Thyroid gland (tissue), 4 donors: ENCODE measurements at regions of chr2 and their contacts with region 1.

Region 1: GRCh38 chr2:171416009-171416926 is 17.5 kb downstream of the METTL8 start:
- DNase-seq: peak; percentile 92 to 94
- H3K4me3 ChIP-seq: no peak overlapping the region
- H3K27ac ChIP-seq: no peak overlapping the region
- H3K4me1 ChIP-seq: no peaks in the 10 kb centered on the region
- H3K27me3 ChIP-seq: no peaks in the 10 kb centered on the region
- CTCF ChIP-seq: peak; percentile 51 to 92 (median 76)
- POLR2A ChIP-seq: no peak

Region 2: DNA sequence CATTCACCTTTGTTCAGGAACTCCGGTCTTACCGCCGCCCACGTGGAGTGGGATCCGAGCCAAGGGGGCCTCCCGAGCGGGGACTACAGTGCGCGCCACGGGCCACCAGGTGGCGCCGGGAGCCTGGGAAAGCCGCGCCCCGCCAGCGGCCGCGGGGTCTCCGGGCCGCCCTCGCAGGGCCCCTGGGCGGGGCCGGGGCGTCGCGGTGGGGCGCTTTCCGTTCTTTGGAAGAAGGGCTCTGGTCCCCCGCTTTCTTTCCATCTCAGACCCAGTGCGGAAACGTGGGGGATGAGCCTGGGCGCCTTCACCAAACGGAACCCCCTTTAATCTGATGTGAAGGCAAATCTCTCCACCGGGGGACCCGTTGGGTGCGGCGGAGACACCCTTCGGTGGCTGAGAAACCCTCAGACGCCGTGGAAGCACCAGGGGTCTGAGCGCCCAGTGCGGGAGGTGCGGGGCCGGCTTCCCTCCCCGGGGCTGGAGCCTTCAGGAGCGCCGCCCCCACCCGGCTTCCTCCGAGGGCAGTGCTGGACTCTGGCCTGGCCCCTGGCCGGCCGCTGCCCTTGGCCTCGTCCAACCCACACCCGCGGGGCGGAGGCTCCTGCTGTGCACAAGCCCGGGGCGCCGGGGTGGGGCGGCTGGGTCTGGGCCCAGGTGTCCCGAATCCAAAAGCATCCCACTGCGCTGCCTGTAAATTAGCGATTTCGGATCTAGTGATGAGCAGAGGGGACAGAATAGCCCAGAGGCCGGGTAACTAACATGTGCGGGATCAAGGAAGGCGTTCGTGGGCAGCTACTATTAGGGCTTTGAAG is 442.6 kb before region 1 on chr2:
- intact Hi-C with region 1: loop called (anchors 5 kb)
- DNase-seq: peak; percentile 93
- H3K4me3 ChIP-seq: peak overlapping the region in 2 of 3 donors; percentile 26 to 57
- H3K27ac ChIP-seq: peak overlapping the region; percentile 20 to 75 (median 69)
- H3K4me1 ChIP-seq: peaks cover 8 to 14% of the 10 kb centered on the region in 2 donors
- H3K27me3 ChIP-seq: no peaks in the 10 kb centered on the region
- CTCF ChIP-seq: peak in 5 of 6 experiments; percentile 60 to 99 (median 97)
- POLR2A ChIP-seq: peak in 1 of 2 donors; percentile 56

Region 3: GRCh38 chr2:171086352-171087290 is 329.6 kb before region 1 on chr2:
- intact Hi-C with region 1: no loop called
- DNase-seq: peak; percentile 34 to 44
- H3K4me3 ChIP-seq: no peak overlapping the region
- H3K27ac ChIP-seq: no peak overlapping the region
- H3K4me1 ChIP-seq: peaks cover 11 to 13% of the 10 kb centered on the region in 2 donors
- H3K27me3 ChIP-seq: no peaks in the 10 kb centered on the region
- CTCF ChIP-seq: peak in 5 of 6 experiments; percentile 16 to 58 (median 40)
- POLR2A ChIP-seq: no peak

Region 4: DNA sequence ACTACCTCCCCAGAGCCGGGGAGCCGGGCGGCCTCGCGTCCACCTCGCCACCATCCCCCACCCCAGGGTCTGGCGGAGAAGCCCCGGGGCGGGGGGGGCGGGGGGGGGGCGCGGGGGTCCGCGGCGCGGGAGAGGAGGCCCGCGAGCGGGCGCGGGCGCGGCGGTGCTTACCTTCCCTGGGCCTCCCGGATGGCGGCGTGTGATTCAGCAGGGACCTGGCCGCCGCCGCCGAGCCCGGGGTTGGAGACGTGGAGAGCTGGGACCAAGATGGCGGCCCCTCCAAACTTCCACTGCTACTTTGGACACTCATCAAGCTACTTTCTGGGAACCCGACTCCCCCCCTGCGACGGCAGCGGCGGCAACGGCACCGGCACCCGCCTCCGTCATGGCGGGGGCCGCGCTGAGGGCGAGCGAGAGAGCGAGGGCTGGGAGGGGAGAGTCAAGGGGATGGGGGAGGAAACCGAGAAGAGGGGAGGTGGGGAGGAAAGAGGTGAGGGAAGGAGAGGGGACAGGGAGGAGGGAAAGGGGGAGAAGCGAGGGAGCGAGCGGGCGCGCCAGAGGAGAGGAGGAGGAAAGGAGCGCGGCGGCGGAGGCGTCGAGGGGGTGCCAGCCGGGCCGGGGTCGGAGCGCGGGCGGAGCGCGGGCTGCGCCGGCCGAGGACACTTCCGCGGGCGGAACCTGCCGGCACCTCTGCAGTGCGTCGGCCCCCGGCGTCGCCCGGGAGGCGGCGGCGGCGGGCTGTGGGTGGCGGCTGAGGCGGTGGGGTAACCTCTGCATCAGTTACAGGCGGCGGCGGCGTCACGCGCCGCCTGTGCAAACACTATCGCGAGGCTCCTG is 255.9 kb before region 1 on chr2 and contains the start of gene TLK1:
- intact Hi-C with region 1: loop called (anchors 10 kb)
- DNase-seq: peak; percentile 70 to 74
- H3K4me3 ChIP-seq: peak within 1 kb of the TSS; percentile 37 to 94 (median 66)
- H3K27ac ChIP-seq: peak within 1 kb of the TSS; percentile 86 to 98 (median 96)
- H3K4me1 ChIP-seq: peaks cover 0 to 8% of the 10 kb centered on the region in 2 donors
- H3K27me3 ChIP-seq: no peaks in the 10 kb centered on the region
- CTCF ChIP-seq: no peak
- POLR2A ChIP-seq: peak in 1 of 2 donors; percentile 65
- total RNA-seq, gene TLK1: 41.0 to 57.6 (median 51.6) TPM